ENCODE measurements at regions of chr4 and their contacts with region 1.

Region 1: GRCh38 chr4:4289941-4290850 is at the starts of genes LYAR and ZBTB49:
- DNase-seq: peak; percentile 89 to 99 (median 96)
- ATAC-seq: peak; percentile 96
- H3K4me3 ChIP-seq: peak within 1 kb of the TSS; percentile 81
- H3K4me3 Mint-ChIP-seq: peak within 1 kb of the TSS; percentile 93 to 98 (median 96)
- H3K27ac ChIP-seq: peak within 1 kb of the TSS; percentile 79
- H3K27ac Mint-ChIP-seq: peak within 1 kb of the TSS; percentile 80 to 95 (median 92)
- H3K4me1 ChIP-seq: peaks cover 20 to 21% of the 10 kb centered on the region in 2 donors
- H3K4me1 Mint-ChIP-seq: peaks cover 40 to 77% (median 57%) of the 10 kb centered on the region in 7 donors
- H3K27me3 ChIP-seq: no peaks in the 10 kb centered on the region
- H3K27me3 Mint-ChIP-seq: no peaks in the 10 kb centered on the region
- total RNA-seq, gene LYAR: 11.1 to 27.4 (median 21.0) TPM
- total RNA-seq, gene ZBTB49: 6.3 to 16.1 (median 8.0) TPM

Region 2: GRCh38 chr4:2630556-2631273 is 1659.5 kb before region 1 on chr4:
- CTCF ChIA-PET with region 1: no interaction called
- POLR2A ChIA-PET with region 1: no interaction called
- intact Hi-C with region 1: no loop called
- DNase-seq: no peak
- ATAC-seq: no peak
- H3K4me3 ChIP-seq: no peak overlapping the region
- H3K4me3 Mint-ChIP-seq: no peak overlapping the region
- H3K27ac ChIP-seq: no peak overlapping the region
- H3K27ac Mint-ChIP-seq: no peak overlapping the region
- H3K4me1 ChIP-seq: no peaks in the 10 kb centered on the region
- H3K4me1 Mint-ChIP-seq: peaks cover 0 to 4% (median 0%) of the 10 kb centered on the region in 7 donors
- H3K27me3 ChIP-seq: no peaks in the 10 kb centered on the region
- H3K27me3 Mint-ChIP-seq: no peaks in the 10 kb centered on the region

Region 3: DNA sequence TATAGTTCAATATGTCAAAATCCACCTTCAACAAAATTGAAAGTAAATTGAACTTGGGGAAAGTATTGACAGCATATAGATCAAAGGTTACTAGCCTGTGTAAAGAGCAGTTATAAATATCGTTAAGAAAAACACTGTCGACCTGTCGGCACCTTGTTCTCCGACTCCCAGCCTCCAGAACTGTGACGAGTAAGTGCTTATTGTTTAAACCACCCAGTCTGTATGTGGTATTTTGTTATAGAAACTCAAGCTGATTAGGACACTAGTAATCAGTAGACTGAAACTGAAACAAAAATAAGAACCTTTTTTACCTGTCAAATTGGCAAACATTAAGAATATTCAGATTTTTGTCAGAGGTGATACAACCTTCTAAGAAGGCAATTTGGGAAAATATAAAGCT is 1198.7 kb before region 1 on chr4:
- CTCF ChIA-PET with region 1: no interaction called
- POLR2A ChIA-PET with region 1: no interaction called
- intact Hi-C with region 1: no loop called
- DNase-seq: no peak
- ATAC-seq: no peak
- H3K4me3 ChIP-seq: no peak overlapping the region
- H3K4me3 Mint-ChIP-seq: peak overlapping the region in 1 of 10 donors; percentile 59
- H3K27ac ChIP-seq: no peak overlapping the region
- H3K27ac Mint-ChIP-seq: peak overlapping the region in 2 of 9 donors; percentile 36 to 77
- H3K4me1 ChIP-seq: no peaks in the 10 kb centered on the region
- H3K4me1 Mint-ChIP-seq: peaks cover 3 to 18% (median 4%) of the 10 kb centered on the region in 7 donors
- H3K27me3 ChIP-seq: no peaks in the 10 kb centered on the region
- H3K27me3 Mint-ChIP-seq: no peaks in the 10 kb centered on the region

Region 4: GRCh38 chr4:4225915-4226605 is 64.1 kb before region 1 on chr4:
- CTCF ChIA-PET with region 1: no interaction called
- POLR2A ChIA-PET with region 1: no interaction called
- intact Hi-C with region 1: no loop called
- DNase-seq: no peak
- ATAC-seq: no peak
- H3K4me3 ChIP-seq: no peak overlapping the region
- H3K4me3 Mint-ChIP-seq: peak overlapping the region in 9 of 10 donors; percentile 28 to 77 (median 56)
- H3K27ac ChIP-seq: no peak overlapping the region
- H3K27ac Mint-ChIP-seq: peak overlapping the region in 1 of 9 donors; percentile 54
- H3K4me1 ChIP-seq: no peaks in the 10 kb centered on the region
- H3K4me1 Mint-ChIP-seq: peaks cover 0 to 14% (median 12%) of the 10 kb centered on the region in 7 donors
- H3K27me3 ChIP-seq: peaks cover 0 to 3% of the 10 kb centered on the region in 2 donors
- H3K27me3 Mint-ChIP-seq: peaks cover 60 to 78% (median 63%) of the 10 kb centered on the region in 5 donors

Region 5: DNA sequence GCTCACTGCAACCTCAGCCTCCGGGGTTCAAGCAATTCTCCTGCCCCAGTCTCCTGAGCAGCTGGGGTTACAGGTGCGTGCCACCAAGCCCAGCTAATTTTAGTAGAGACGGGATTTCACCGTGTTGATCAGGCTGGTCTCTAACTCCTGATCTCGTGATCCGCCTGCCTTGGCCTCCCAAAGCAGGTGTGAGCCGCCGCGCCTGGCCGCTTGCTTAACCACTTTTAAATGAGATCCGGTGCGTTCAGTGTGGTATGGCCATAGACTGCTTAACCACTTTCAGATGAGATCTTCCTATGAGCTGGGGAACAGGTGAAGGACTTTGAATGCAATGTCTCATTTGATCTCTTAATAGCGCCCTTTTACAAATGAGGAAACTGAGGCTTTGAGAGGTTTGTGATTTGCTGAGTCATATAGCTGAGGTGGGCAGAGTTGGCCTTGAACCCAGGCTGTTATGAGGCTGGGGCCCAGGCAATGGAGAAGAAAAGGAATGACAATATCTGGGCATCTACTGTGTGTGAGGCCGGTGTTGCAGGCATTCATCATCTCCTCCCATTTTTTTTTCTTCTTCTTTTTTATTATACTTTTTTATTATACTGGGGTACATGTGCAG is 54.8 kb after region 1 on chr4:
- CTCF ChIA-PET with region 1: interaction called, 3 read pairs
- POLR2A ChIA-PET with region 1: no interaction called
- intact Hi-C with region 1: loop called in 1 of 2 experiments (anchors 1 kb)
- DNase-seq: no peak
- ATAC-seq: no peak
- H3K4me3 ChIP-seq: no peak overlapping the region
- H3K4me3 Mint-ChIP-seq: no peak overlapping the region
- H3K27ac ChIP-seq: no peak overlapping the region
- H3K27ac Mint-ChIP-seq: peak overlapping the region in 6 of 9 donors; percentile 8 to 70 (median 14)
- H3K4me1 ChIP-seq: peaks cover 5 to 13% of the 10 kb centered on the region in 2 donors
- H3K4me1 Mint-ChIP-seq: peaks cover 11 to 56% (median 29%) of the 10 kb centered on the region in 7 donors
- H3K27me3 ChIP-seq: no peaks in the 10 kb centered on the region
- H3K27me3 Mint-ChIP-seq: no peaks in the 10 kb centered on the region

Region 6: DNA sequence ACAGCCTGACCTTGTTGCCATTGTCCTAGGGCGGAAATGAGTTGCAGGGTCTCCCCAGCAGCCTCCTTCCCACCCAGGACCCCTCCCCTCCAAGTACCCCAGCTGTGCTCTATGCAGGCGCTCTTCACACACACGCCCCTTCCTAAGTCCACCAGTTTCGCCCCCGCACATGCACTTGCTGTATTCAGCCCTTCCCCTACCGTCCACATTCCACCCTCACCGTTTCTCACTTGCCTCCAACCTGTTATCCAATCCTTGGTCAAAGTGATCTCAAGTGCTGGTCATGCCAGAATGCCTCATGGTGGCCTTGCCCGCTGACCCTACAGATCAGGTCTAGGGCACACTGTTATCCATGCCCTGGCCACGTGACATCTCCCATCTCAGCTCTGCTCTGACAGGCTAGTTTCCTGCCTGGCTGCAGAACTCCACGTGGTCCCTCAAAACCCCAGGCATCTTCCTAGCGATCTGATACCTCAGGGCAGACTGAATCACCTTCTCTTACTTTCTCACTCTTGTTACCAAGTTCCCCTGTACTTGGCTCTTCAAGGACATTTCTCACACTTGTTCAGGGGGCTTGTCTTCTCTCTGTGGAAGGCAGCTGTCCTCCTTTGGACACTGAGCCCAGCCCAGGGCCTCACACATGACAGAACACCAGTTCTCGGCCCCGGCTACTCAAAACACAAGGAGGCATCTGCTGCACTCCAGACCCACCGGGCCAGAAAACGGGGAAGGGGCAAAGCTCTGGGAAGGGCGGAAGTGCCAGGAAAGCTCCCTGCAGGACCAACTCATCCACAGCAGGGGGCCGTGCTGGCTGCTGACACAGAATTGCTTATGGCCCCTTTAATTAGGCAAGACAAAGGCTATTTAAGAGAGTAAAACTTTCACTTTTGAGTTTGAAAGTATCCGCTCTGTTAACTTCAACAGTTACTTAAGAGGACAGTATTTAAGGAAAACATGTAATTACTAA is 136.6 kb after region 1 on chr4:
- CTCF ChIA-PET with region 1: no interaction called
- POLR2A ChIA-PET with region 1: no interaction called
- intact Hi-C with region 1: no loop called
- DNase-seq: no peak
- ATAC-seq: no peak
- H3K4me3 ChIP-seq: no peak overlapping the region
- H3K4me3 Mint-ChIP-seq: no peak overlapping the region
- H3K27ac ChIP-seq: no peak overlapping the region
- H3K27ac Mint-ChIP-seq: peak overlapping the region in 2 of 9 donors; percentile 23 to 66
- H3K4me1 ChIP-seq: no peaks in the 10 kb centered on the region
- H3K4me1 Mint-ChIP-seq: peaks cover 0 to 6% (median 3%) of the 10 kb centered on the region in 7 donors
- H3K27me3 ChIP-seq: no peaks in the 10 kb centered on the region
- H3K27me3 Mint-ChIP-seq: no peaks in the 10 kb centered on the region

Measured in naive thymus-derived CD4-positive, alpha-beta T cell (primary cell).